ENCODE measurements at regions of chr9 and their contacts with region 1.

Region 1: DNA sequence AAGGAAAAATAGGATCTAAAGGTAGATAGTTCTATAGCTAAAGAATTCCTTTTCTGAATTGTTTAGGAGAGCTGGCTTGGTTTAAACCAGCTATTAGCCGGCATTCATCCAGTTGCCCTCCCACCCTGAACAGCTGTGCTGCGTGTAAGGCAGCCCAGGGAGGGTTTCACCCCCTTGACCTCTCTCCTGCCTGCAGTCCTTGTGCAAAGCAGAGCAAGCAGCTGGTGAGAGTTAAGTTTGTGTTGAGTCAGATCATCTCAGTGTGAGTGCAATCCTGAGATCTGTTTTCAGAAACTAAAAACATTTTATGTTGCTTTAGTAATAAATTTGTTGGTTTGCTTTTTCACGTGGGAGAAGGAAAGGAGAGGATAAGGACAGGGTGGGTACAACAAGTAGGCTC is 13.0 kb downstream of the SLC25A25 start:
- DNase-seq: no peak
- ATAC-seq: no peak
- H3K4me3 ChIP-seq: no peak overlapping the region
- H3K27ac ChIP-seq: 0 out of 2 replicates have a peak overlapping the region, but pooled peaks have one; percentile 6
- H3K4me1 ChIP-seq: peaks cover 63 to 73% of the 10 kb centered on the region in 2 experiments
- H3K27me3 ChIP-seq: no peaks in the 10 kb centered on the region
- CTCF ChIP-seq: no peak
- POLR2A ChIP-seq: no peak
- RAD21 ChIP-seq: no peak

Region 2: GRCh38 chr9:128034821-128035764 is 46.0 kb before region 1 on chr9:
- CTCF ChIA-PET with region 1: interaction called, 4 read pairs
- POLR2A ChIA-PET with region 1: no interaction called
- RAD21 ChIA-PET with region 1: no interaction called
- intact Hi-C with region 1: loop called (anchors 5 kb)
- DNase-seq: peak; percentile 85
- ATAC-seq: peak; percentile 92
- H3K4me3 ChIP-seq: no peak overlapping the region
- H3K27ac ChIP-seq: no peak overlapping the region
- H3K4me1 ChIP-seq: peaks cover 0 to 30% of the 10 kb centered on the region in 2 experiments; a peak in 2 of 4 replicates
- H3K27me3 ChIP-seq: no peaks in the 10 kb centered on the region
- CTCF ChIP-seq: peak; percentile 72 to 96 (median 87)
- POLR2A ChIP-seq: no peak
- RAD21 ChIP-seq: peak; percentile 99

Region 3: DNA sequence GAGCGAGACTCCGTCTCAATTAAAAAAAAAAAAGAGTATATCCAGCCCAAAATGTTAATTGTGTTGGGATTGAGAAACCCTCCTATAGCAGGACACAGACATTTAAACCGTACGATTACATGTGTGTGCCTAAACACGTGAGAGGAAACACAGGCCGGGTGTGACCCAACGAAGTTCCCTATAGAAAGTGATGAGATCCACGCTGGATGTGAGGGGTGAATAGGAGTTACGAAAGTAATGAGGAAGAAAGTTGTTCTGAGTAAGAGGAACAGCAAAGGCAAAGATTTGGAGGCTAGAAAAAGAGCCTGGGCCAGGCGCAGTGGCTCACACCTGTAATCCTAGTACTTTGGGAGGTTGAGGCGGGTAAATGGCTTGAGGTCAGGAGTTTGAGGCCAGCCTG is 27.5 kb before region 1 on chr9:
- CTCF ChIA-PET with region 1: interaction called, 4 read pairs
- POLR2A ChIA-PET with region 1: interaction called, 3 read pairs
- RAD21 ChIA-PET with region 1: no interaction called
- intact Hi-C with region 1: loop called (anchors 2 kb)
- DNase-seq: no peak
- ATAC-seq: no peak
- H3K4me3 ChIP-seq: no peak overlapping the region
- H3K27ac ChIP-seq: no peak overlapping the region
- H3K4me1 ChIP-seq: peaks cover 43 to 66% of the 10 kb centered on the region in 2 experiments
- H3K27me3 ChIP-seq: no peaks in the 10 kb centered on the region
- CTCF ChIP-seq: no peak
- POLR2A ChIP-seq: no peak
- RAD21 ChIP-seq: no peak

Region 4: DNA sequence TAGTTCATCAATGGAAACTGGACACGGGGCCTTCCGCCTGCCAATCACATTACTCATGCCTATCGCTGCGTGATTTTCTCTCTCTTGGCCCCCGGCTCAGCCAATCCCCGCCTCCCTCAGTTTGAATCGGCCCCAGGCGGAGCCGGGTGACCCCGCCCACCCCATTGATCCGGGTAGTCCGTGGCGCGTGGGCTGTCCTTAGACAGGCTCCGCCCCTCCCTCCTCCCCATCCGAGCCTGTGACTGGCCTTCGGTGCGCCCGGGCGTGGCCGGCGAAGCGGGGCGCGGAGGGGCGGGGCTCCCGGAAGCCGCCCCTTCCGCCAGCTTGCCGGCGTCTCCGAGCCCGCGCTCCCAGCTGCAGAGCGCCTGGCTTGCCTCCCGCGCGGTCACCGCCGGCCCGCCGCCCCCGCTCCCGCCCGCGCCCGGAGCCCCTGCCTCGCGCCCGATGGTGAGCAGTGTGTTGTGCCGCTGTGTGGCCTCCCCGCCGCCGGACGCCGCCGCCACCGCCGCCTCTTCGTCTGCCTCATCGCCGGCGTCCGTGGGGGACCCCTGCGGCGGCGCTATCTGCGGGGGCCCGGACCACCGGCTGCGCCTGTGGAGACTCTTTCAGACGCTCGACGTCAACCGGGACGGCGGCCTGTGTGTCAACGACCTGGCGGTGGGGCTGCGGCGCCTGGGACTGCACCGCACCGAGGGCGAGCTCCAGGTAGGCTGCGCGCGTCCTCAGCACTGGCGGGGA is 13.0 kb before region 1 on chr9 and contains the start of gene SLC25A25:
- CTCF ChIA-PET with region 1: interaction called, 8 read pairs
- POLR2A ChIA-PET with region 1: interaction called, 23 read pairs
- RAD21 ChIA-PET with region 1: interaction called in 1 of 2 experiments, 4 read pairs
- intact Hi-C with region 1: no loop called
- DNase-seq: peak; percentile 97
- ATAC-seq: peak; percentile 86
- H3K4me3 ChIP-seq: peak within 1 kb of the TSS; percentile 81 to 85
- H3K27ac ChIP-seq: peak within 1 kb of the TSS; percentile 95
- H3K4me1 ChIP-seq: peaks cover 36 to 48% of the 10 kb centered on the region in 2 experiments
- H3K27me3 ChIP-seq: no peaks in the 10 kb centered on the region
- CTCF ChIP-seq: no peak
- POLR2A ChIP-seq: no peak
- RAD21 ChIP-seq: no peak
- total RNA-seq, gene SLC25A25: 15.3 TPM

Measured in HCT116 (cell line).